Endothelial cell of umbilical vein (primary cell): ENCODE measurements at regions of chr6 and their contacts with region 1.

Region 1: GRCh38 chr6:39302669-39303424 is 11.4 kb downstream of the KCNK17 start:
- DNase-seq: peak; percentile 63
- H3K4me3 ChIP-seq: no peak overlapping the region
- H3K27ac ChIP-seq: no peak overlapping the region
- H3K4me1 ChIP-seq: no peaks in the 10 kb centered on the region
- H3K27me3 ChIP-seq: no peaks in the 10 kb centered on the region
- CTCF ChIP-seq: peak; percentile 76 to 90
- POLR2A ChIP-seq: no peak

Region 2: DNA sequence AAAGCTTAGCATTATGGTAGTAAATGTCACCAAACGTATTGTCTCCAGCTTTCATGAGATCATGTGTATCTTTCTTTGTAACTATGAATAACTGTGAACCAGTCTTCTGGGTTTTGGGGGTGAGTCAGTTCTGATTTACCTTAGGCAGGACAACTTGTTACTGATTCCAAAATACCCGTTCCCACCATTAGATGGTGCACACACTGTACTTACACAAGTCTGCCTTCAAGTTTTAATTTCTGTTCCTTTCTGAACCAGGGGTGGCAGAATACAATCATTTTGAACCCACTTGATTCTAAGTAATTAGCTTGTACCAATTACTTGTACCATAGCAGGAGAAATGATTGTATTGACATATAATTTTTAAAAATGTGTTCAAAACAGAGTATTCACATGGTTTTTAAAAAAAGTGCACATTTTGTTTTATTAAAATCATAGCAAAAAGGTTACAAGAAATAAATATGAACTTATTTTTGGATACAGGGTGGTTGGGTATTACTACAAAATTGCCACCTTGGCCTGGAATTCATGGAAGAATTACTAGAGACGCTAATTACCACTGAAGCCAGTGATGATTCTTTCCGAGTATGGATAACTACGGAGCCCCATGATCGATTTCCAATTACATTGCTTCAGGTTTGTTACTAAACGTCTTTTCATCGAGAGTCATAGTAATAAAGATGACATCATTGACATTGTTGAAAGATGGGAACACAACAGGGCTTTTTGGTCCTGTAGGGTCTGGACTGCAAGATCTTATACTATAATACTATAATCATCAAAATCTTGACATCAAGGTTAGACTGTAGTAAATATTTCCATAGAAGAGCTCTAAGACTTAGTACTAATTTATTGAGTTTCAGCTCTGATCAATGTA is 329.4 kb before region 1 on chr6:
- CTCF ChIA-PET with region 1: interaction called, 24 read pairs
- POLR2A ChIA-PET with region 1: no interaction called
- dilution Hi-C with region 1: no loop called
- intact Hi-C with region 1: loop called (anchors 1 kb)
- DNase-seq: peak; percentile 76
- H3K4me3 ChIP-seq: no peak overlapping the region
- H3K27ac ChIP-seq: no peak overlapping the region
- H3K4me1 ChIP-seq: no peaks in the 10 kb centered on the region
- H3K27me3 ChIP-seq: peaks cover 7 to 28% of the 10 kb centered on the region in 2 experiments
- CTCF ChIP-seq: peak; percentile 24 to 46
- POLR2A ChIP-seq: no peak

Region 3: DNA sequence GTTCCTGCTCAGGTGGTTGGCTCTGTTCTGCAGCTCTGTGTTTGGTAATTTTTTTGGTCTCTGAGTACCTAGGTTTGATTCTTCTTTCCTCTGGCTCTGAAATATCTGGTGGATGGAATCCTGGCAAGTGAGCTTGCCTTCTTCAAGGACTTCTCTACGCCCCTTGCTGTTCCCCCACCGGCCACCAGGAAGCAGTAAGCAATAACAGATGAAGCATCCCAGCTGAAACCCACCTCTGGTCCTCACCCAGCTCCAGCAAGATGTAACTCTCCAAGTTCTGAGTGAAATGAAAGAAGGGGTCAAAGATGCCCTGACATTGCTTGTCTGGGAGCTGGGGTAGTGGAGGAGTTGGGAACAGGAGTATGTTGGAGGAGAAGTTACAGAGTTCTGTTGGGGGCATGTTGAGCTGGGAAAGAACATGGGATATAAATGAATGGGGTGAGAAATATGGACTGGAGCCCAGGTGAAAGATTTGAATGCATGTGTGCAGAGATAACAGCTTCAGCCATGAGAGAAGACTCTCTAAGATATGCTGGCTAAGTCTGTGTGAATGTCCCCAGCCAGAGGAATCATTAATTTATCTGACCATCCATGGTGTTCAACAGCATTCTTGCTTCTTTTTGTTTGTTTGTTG is 305.6 kb before region 1 on chr6:
- CTCF ChIA-PET with region 1: interaction called, 60 read pairs
- POLR2A ChIA-PET with region 1: no interaction called
- dilution Hi-C with region 1: no loop called
- intact Hi-C with region 1: loop called (anchors 1 kb)
- DNase-seq: peak; percentile 18
- H3K4me3 ChIP-seq: no peak overlapping the region
- H3K27ac ChIP-seq: no peak overlapping the region
- H3K4me1 ChIP-seq: no peaks in the 10 kb centered on the region
- H3K27me3 ChIP-seq: peaks cover 4 to 9% of the 10 kb centered on the region in 2 experiments
- CTCF ChIP-seq: peak; percentile 37 to 67
- POLR2A ChIP-seq: no peak

Region 4: GRCh38 chr6:39088331-39088730 is 214.5 kb before region 1 on chr6:
- CTCF ChIA-PET with region 1: interaction called, 28 read pairs
- POLR2A ChIA-PET with region 1: no interaction called
- dilution Hi-C with region 1: no loop called
- intact Hi-C with region 1: loop called (anchors 2 kb)
- DNase-seq: peak; percentile 37
- H3K4me3 ChIP-seq: no peak overlapping the region
- H3K27ac ChIP-seq: no peak overlapping the region
- H3K4me1 ChIP-seq: peaks cover 6% of the 10 kb centered on the region
- H3K27me3 ChIP-seq: peaks cover 17 to 29% of the 10 kb centered on the region in 2 experiments
- CTCF ChIP-seq: peak in 1 of 2 donors; percentile 31
- POLR2A ChIP-seq: no peak

Region 5: DNA sequence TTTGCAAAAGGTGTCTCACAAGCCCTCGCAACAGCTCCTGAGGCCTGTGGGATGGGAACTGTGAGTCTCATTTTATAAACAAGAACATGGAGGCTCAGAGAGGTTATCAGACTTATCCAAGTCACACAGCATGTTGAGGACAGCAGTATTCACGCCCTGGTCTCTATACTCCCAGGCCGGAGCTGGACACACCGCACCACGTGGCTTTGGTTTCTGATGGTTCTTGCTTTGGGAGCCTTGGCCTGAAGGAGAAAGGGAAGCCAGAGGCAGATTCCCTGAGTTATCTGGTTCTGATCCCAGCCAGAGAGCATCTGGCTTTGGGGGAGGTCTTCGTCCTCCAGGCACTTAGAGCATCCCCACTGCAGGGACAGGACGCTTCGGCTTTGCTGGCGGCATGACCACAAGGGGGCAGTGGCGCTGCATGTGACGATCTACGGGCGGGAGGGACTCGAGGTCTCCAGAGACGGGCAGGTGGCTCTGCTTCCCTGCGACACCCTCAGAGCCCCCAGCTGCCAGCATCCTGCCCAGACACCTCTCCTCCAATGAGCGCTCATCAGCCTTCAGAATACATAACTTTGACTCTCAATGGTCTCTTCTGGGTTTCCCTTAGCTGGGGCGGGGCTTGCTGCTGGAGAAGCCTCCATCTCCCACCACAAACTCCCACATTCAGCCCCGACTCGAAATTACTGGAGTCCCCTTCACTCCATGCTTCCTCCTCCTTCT is 136.5 kb before region 1 on chr6:
- CTCF ChIA-PET with region 1: interaction called, 223 read pairs
- POLR2A ChIA-PET with region 1: no interaction called
- dilution Hi-C with region 1: no loop called
- intact Hi-C with region 1: loop called (anchors 1 kb)
- DNase-seq: peak; percentile 48
- H3K4me3 ChIP-seq: no peak overlapping the region
- H3K27ac ChIP-seq: no peak overlapping the region
- H3K4me1 ChIP-seq: no peaks in the 10 kb centered on the region
- H3K27me3 ChIP-seq: no peaks in the 10 kb centered on the region
- CTCF ChIP-seq: peak; percentile 89 to 92
- POLR2A ChIP-seq: no peak